ENCODE measurements at regions of chr18 and their contacts with region 1.

Region 1: GRCh38 chr18:74081966-74082741 is 65.5 kb downstream of the FBXO15 start:
- DNase-seq: peak; percentile 59 to 77
- H3K4me3 ChIP-seq: no peak overlapping the region
- H3K27ac ChIP-seq: no peak overlapping the region
- H3K4me1 ChIP-seq: no peaks in the 10 kb centered on the region
- H3K27me3 ChIP-seq: no peaks in the 10 kb centered on the region
- CTCF ChIP-seq: peak; percentile 94 to 98 (median 96)
- EP300 ChIP-seq: no peak
- POLR2A ChIP-seq: no peak
- RAD21 ChIP-seq: peak; percentile 78 to 85

Region 2: GRCh38 chr18:73945130-73945792 is 136.9 kb before region 1 on chr18:
- CTCF ChIA-PET with region 1: no interaction called
- POLR2A ChIA-PET with region 1: no interaction called
- DNase-seq: no peak
- H3K4me3 ChIP-seq: no peak overlapping the region
- H3K27ac ChIP-seq: no peak overlapping the region
- H3K4me1 ChIP-seq: peaks cover 0 to 2% (median under 1%) of the 10 kb centered on the region in 4 experiments; a peak in 1 of 7 replicates
- H3K27me3 ChIP-seq: no peaks in the 10 kb centered on the region
- CTCF ChIP-seq: no peak
- EP300 ChIP-seq: no peak
- POLR2A ChIP-seq: no peak
- RAD21 ChIP-seq: no peak

Region 3: DNA sequence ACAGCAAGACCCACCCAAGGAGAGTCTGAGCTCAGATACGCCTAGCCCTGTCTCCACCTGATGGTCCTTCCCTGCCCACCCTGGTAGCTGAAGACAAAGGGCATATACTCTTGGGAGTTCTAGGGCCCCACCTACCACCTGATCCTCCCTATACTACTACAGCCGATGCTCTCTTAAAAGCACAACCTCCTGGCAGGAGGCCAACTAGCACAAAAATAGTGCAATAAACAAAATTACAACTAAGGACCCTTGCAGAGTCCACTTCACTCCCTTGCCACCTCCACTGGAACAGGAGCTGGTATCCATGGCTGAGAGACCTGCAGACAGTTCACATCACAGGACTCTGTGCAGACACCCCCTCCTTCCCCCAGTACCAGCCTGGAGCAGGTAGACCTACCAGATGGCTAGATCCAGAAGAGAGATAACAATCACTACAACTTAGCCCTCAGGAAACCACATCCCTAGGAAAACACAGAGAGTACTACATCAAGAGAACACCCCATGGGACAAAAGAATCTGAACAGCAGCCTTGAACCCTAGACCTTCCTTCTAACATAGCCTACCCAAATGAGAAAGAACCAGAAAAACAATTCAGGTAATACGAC is 15.5 kb after region 1 on chr18:
- CTCF ChIA-PET with region 1: interaction called, 12 read pairs
- POLR2A ChIA-PET with region 1: no interaction called
- DNase-seq: no peak
- H3K4me3 ChIP-seq: no peak overlapping the region
- H3K27ac ChIP-seq: no peak overlapping the region
- H3K4me1 ChIP-seq: peaks cover 0 to 4% (median 0%) of the 10 kb centered on the region in 4 experiments; a peak in 1 of 7 replicates
- H3K27me3 ChIP-seq: peaks cover 0 to 1% (median 0%) of the 10 kb centered on the region in 4 experiments; a peak in 1 of 7 replicates
- CTCF ChIP-seq: no peak
- EP300 ChIP-seq: no peak
- POLR2A ChIP-seq: no peak
- RAD21 ChIP-seq: no peak

Region 4: GRCh38 chr18:74116633-74117554 is 34.7 kb after region 1 on chr18:
- CTCF ChIA-PET with region 1: interaction called, 25 read pairs
- POLR2A ChIA-PET with region 1: no interaction called
- DNase-seq: peak in 1 of 2 experiments; percentile 17
- H3K4me3 ChIP-seq: peak overlapping the region in 1 of 4 experiments; percentile 30; a peak in 1 of 8 replicates
- H3K27ac ChIP-seq: no peak overlapping the region
- H3K4me1 ChIP-seq: peaks cover 2 to 13% (median 8%) of the 10 kb centered on the region in 4 experiments; a peak in 5 of 7 replicates
- H3K27me3 ChIP-seq: no peaks in the 10 kb centered on the region
- CTCF ChIP-seq: peak in 2 of 3 experiments; percentile 43 to 56; a peak in 2 of 4 replicates
- EP300 ChIP-seq: no peak
- POLR2A ChIP-seq: no peak
- RAD21 ChIP-seq: peak; percentile 63 to 65

Region 5: GRCh38 chr18:74152857-74153256 is 70.7 kb after region 1 on chr18:
- CTCF ChIA-PET with region 1: interaction called, 13 read pairs
- POLR2A ChIA-PET with region 1: no interaction called
- DNase-seq: no peak
- H3K4me3 ChIP-seq: no peak overlapping the region
- H3K27ac ChIP-seq: no peak overlapping the region
- H3K4me1 ChIP-seq: peaks cover 0 to 6% (median 1%) of the 10 kb centered on the region in 4 experiments; a peak in 4 of 7 replicates
- H3K27me3 ChIP-seq: no peaks in the 10 kb centered on the region
- CTCF ChIP-seq: peak; percentile 38 to 56 (median 46)
- EP300 ChIP-seq: no peak
- POLR2A ChIP-seq: no peak
- RAD21 ChIP-seq: peak; percentile 27 to 53; a peak in 3 of 4 replicates

Region 6: GRCh38 chr18:74495581-74496507 is 413.7 kb after region 1 on chr18 and contains the start of gene CNDP2:
- CTCF ChIA-PET with region 1: no interaction called
- POLR2A ChIA-PET with region 1: no interaction called
- DNase-seq: peak; percentile 96 to 100
- H3K4me3 ChIP-seq: peak within 1 kb of the TSS; percentile 83 to 94 (median 88)
- H3K27ac ChIP-seq: peak within 1 kb of the TSS; percentile 93
- H3K4me1 ChIP-seq: peaks cover 2 to 16% (median 5%) of the 10 kb centered on the region in 4 experiments; a peak in 5 of 7 replicates
- H3K27me3 ChIP-seq: no peaks in the 10 kb centered on the region
- CTCF ChIP-seq: no peak
- EP300 ChIP-seq: no peak; a peak in 1 of 3 replicates
- POLR2A ChIP-seq: peak; percentile 82 to 92
- RAD21 ChIP-seq: no peak
- total RNA-seq, gene CNDP2: 243 TPM in 2 replicates

Measured in H1 (cell line).